Dorsolateral prefrontal cortex (tissue), 120 donors: ENCODE measurements at regions of chr9 and their contacts with region 1.

Region 1: GRCh38 chr9:70484210-70485130 is 70.0 kb upstream of the KLF9 start:
- DNase-seq: peak in 2 of 10 donors; percentile 41 to 52
- H3K4me3 ChIP-seq: no peak overlapping the region
- H3K27ac ChIP-seq: peak overlapping the region in 46 of 59 donors; percentile 14 to 98 (median 58)
- H3K27me3 ChIP-seq: no peaks in the 10 kb centered on the region
- CTCF ChIP-seq: peak; percentile 59 to 91 (median 84)

Region 2: DNA sequence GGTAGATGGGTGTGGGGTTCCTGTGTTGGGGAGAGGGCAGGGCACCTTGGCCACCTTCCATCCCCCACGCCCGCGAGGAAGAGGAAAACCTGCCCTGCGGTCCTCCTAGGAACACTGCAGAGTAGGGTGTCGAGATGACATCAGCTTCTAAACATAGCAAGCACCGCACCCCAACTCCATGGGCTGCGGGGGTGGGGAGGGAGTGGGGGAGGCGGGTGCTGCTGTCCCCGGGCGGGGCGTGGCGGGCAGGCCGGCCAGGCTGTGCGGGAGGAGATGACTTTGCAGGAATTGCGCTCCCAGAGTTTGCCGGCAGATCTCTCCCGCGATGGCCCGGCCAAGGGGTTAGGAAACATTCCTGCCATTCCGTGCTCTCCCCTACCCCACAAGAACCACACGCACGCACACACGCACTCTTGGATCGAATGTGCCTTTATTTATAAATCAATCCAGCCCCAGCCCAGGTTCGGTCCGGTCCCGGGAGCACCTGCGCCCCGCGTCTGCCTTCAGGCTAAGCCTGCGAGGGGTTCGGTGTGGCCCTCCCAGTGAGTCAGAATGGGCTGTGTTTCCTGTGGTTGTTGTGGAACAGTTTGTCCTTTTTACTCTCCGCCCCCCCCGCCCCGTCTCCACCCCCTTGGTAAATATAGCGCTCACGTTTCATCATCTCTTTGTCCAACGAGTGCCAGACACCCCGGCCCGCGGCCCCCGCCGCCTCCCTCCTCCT is 64.8 kb before region 1 on chr9:
- intact Hi-C with region 1: loop called (anchors 1 kb)
- DNase-seq: peak; percentile 81 to 93 (median 92)
- H3K4me3 ChIP-seq: peak overlapping the region; percentile 37 to 83 (median 65)
- H3K27ac ChIP-seq: peak overlapping the region; percentile 96 to 100 (median 99)
- H3K27me3 ChIP-seq: no peaks in the 10 kb centered on the region
- CTCF ChIP-seq: peak in 21 of 56 donors; percentile 1 to 35 (median 16)